Activated CD4-positive, alpha-beta memory T cell treated with anti-CD3 and anti-CD28 coated beads for 36 hours (primary cell): ENCODE measurements at regions of chr9 and their contacts with region 1.

Region 1: GRCh38 chr9:137034863-137035761 is 3.2 kb upstream of the FUT7 start:
- DNase-seq: peak; percentile 93
- H3K4me3 Mint-ChIP-seq: peak overlapping the region; percentile 61
- H3K27ac Mint-ChIP-seq: peak overlapping the region; percentile 89
- H3K4me1 Mint-ChIP-seq: peaks cover 41% of the 10 kb centered on the region
- H3K27me3 Mint-ChIP-seq: no peaks in the 10 kb centered on the region

Region 2: DNA sequence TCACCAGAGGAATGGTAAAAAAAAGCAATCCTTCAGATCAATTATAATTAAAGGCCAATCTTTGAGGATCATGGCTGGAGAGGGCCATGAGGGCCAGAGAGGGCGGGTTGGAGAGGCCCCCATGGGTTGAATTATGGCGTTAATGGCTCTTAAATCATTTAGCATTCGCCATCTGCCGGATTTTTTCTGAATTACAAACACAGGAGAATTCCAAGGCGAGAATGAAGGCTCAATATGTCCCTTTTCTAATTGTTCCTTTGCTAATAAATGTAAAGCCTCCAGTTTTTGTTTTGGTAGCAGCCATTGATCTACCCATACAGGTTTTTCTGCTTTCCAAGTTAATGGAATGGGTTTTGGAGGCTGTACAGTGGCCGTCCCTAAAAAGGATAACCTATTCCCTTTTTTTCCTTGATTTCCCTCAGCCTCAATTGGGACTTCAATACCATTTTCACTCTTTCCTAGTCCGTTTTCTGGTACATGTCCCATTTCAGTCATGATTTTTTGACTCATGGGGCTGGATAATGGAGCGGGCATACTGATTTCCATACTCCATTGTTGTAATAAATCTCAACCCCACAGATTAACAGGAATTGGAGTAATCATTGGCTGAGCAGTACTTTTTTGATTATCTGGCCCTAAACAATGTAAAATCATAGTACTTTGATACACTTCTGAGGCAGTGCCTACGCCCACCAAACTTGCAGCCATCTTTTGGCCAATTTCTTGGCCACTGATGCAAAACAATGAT is 250.7 kb before region 1 on chr9:
- CTCF ChIA-PET with region 1: interaction called, 16 read pairs
- POLR2A ChIA-PET with region 1: no interaction called
- intact Hi-C with region 1: loop called (anchors 1 kb)
- DNase-seq: no peak
- H3K4me3 Mint-ChIP-seq: no peak overlapping the region
- H3K27ac Mint-ChIP-seq: no peak overlapping the region
- H3K4me1 Mint-ChIP-seq: peaks cover 16% of the 10 kb centered on the region
- H3K27me3 Mint-ChIP-seq: peaks cover 1% of the 10 kb centered on the region

Region 3: DNA sequence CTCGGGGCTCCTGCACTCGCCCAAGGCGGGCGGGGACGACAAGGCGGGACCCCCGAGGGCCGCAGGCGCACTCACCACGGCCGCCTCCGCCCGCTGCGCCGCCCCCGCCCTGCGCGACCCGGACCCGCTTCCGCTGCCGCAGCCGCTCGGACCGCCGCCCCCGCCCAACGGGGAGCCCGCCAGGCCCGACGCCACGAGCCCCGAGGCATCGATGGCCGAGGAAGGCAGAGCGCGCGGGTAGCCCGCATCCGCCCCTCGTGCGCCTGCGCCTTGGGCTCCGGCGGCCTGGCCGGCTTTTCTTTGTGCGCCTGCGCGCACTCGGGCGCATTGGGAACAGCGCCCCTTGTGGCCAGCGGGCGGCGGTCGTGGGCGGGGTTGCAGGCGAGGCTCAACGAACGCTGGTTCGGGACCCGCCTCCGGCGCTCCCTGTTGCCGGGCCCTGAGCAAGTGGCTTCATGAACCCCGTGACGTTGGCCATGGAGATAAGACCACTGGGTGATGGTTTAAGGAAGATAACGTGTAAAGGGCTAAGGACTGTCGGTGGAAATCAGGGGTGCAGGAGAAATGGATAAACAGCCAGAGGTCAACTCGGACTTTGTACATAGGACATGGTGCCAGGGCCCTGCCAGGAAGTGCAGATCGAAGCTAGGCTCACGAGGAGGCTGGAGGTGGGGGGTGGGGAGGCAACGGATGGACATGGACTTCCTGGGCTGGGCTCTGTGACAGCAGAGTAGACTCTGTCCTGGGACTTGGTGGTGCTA is 90.4 kb before region 1 on chr9 and contains the starts of genes C8G and FBXW5:
- CTCF ChIA-PET with region 1: interaction called, 49 read pairs
- POLR2A ChIA-PET with region 1: interaction called, 4 read pairs
- intact Hi-C with region 1: loop called (anchors 10 kb)
- DNase-seq: peak; percentile 96
- H3K4me3 Mint-ChIP-seq: peak within 1 kb of the TSS; percentile 80
- H3K27ac Mint-ChIP-seq: peak within 1 kb of the TSS; percentile 86
- H3K4me1 Mint-ChIP-seq: peaks cover 12% of the 10 kb centered on the region
- H3K27me3 Mint-ChIP-seq: no peaks in the 10 kb centered on the region
- total RNA-seq, gene C8G: 0.90 to 0.94 TPM
- total RNA-seq, gene FBXW5: 66.8 to 69.4 TPM

Region 4: GRCh38 chr9:136991993-136992818 is 42.9 kb before region 1 on chr9 and contains the start of gene PAXX:
- CTCF ChIA-PET with region 1: interaction called, 15 read pairs
- POLR2A ChIA-PET with region 1: interaction called, 12 read pairs
- intact Hi-C with region 1: loop called (anchors 5 kb)
- DNase-seq: peak; percentile 96
- H3K4me3 Mint-ChIP-seq: peak within 1 kb of the TSS; percentile 82
- H3K27ac Mint-ChIP-seq: peak within 1 kb of the TSS; percentile 79
- H3K4me1 Mint-ChIP-seq: peaks cover 18% of the 10 kb centered on the region
- H3K27me3 Mint-ChIP-seq: peaks cover 4% of the 10 kb centered on the region
- total RNA-seq, gene PAXX: 71.0 to 71.2 TPM

Region 5: GRCh38 chr9:137021979-137022619 is 13.0 kb before region 1 on chr9:
- CTCF ChIA-PET with region 1: interaction called, 56 read pairs
- POLR2A ChIA-PET with region 1: interaction called, 5 read pairs
- intact Hi-C with region 1: no loop called
- DNase-seq: peak; percentile 89
- H3K4me3 Mint-ChIP-seq: no peak overlapping the region
- H3K27ac Mint-ChIP-seq: no peak overlapping the region
- H3K4me1 Mint-ChIP-seq: peaks cover under 1% of the 10 kb centered on the region
- H3K27me3 Mint-ChIP-seq: no peaks in the 10 kb centered on the region

Region 6: DNA sequence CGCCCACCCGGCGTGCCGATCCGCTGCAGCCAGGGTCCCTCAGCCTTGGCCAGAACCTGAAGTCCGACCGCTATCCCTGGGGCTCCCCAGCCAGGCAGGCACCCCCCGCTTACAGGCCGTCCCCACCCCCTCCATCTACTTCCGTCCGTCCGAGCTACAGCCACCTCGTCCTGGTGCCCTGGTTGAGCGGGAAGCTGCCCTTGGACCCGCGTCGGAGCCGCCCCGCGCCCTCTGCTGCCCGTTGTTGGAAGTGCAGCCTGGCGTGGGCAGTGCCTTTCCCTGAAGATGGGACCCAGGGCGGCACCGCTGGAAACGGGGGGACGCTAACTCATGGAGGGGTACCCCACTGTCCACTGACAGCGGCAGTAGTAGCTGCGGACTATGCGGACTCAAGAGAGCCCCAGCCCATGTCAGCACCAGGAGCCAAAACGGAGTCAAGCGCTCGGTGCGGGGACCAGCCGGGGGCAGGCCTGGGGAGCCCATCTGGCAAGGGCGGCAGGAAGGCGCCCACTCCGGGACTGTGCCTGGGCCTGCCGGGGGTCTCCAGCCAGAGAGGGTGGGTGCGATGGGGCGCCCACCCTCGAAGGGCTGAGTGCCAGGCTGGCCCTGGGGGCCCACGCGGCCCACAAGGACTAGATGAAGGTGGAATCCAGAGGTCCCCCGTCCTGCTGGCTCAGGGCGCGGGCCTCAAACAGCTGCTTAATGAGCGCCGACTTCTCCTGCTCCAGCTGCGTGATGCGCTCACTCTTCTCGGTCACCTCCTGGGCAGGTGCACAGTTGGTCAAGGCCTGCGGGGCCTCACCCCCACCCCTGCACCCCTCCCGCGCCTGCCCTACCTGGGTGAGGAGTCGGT is 29.1 kb after region 1 on chr9:
- CTCF ChIA-PET with region 1: interaction called, 73 read pairs
- POLR2A ChIA-PET with region 1: no interaction called
- intact Hi-C with region 1: no loop called
- DNase-seq: peak; percentile 68
- H3K4me3 Mint-ChIP-seq: no peak overlapping the region
- H3K27ac Mint-ChIP-seq: peak overlapping the region; percentile 44
- H3K4me1 Mint-ChIP-seq: peaks cover 4% of the 10 kb centered on the region
- H3K27me3 Mint-ChIP-seq: no peaks in the 10 kb centered on the region

Region 7: DNA sequence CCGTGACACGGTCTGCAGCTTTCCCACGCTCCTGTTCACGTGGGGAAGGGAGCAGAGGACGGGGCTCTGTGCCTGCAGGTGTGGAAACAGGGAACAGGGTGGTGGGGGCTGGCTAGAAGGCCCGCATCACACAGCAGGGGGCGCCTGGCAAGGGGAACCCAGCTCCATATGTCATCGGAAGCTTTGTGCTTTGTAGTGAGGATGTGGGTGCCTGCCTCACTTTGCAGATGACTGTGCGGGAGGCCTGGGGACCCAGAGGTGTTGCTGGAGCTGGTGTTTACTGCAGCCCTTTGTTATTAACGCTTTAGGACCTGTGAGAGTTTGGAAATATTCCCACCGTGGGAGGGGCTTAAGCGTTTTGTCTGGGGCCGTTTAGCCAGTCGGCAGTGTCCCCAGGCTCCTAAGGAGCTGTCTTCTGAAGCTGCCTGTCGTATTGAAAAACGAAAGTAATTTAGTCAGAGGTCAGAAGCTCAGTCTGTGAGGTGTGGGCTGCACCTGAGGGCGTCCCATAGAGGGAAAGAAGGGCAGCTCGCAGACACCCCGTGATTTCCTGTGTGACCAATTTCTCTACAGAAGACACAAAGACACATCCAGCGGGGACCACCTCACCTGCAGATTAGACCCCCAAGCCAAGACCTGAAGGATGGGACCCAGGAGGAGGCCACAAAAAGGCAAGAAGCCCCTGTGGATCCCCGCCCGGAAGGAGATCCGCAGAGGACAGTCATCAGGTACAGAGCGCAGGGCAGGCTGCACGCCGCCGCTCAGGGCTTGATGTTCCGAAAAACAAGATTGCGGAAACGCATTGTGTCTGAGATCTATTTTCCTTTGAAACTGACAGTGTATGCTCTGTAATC is 60.8 kb after region 1 on chr9:
- CTCF ChIA-PET with region 1: interaction called, 14 read pairs
- POLR2A ChIA-PET with region 1: no interaction called
- intact Hi-C with region 1: no loop called
- DNase-seq: peak; percentile 93
- H3K4me3 Mint-ChIP-seq: peak overlapping the region; percentile 62
- H3K27ac Mint-ChIP-seq: peak overlapping the region; percentile 84
- H3K4me1 Mint-ChIP-seq: peaks cover 19% of the 10 kb centered on the region
- H3K27me3 Mint-ChIP-seq: no peaks in the 10 kb centered on the region